ENCODE measurements at regions of chr14 and their contacts with region 1.

Region 1: DNA sequence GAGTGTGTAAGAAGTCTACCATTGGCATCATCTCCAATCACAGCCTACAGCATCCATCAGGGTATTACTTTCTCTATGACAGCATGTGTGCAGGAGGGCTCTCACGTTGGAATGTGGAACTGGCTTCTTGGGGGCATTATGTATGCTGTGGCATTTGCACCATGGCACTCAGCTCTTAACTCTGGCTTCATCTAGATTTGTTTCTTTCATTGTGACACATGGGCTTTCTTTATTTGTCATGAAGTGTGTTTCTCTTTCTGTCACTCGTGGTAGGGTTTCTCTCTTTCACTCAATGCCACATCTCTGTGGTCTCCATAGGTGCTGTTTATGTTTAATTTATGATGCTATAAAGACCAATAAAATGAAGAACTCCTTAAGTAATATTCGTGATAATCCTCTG is 191.2 kb upstream of the GARIN2 start:
- DNase-seq: no peak
- H3K4me3 Mint-ChIP-seq: no peak overlapping the region
- H3K27ac Mint-ChIP-seq: no peak overlapping the region
- H3K4me1 Mint-ChIP-seq: peaks cover 12% of the 10 kb centered on the region
- H3K27me3 Mint-ChIP-seq: no peaks in the 10 kb centered on the region

Region 2: DNA sequence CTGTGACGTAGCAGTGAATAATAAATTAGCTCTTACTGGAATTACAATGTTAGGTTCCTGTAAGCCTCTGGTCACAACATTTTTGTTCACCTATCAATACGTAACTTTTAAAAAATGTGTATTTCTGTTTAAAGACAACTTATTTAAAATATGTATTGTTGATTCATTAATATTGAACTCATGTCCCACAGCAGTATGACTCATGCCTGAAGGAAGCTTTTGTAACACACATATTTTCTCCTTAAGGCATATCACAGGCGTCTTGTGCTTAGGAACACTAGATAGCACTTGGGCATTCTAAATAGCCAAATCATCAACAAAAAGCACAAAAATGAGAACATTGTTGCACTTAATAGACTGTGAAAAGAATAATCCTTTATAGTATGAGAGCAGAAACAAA is 397.6 kb before region 1 on chr14:
- intact Hi-C with region 1: loop called (anchors 10 kb)
- DNase-seq: no peak
- H3K4me3 Mint-ChIP-seq: no peak overlapping the region
- H3K27ac Mint-ChIP-seq: no peak overlapping the region
- H3K4me1 Mint-ChIP-seq: peaks cover 7% of the 10 kb centered on the region
- H3K27me3 Mint-ChIP-seq: no peaks in the 10 kb centered on the region

Region 3: DNA sequence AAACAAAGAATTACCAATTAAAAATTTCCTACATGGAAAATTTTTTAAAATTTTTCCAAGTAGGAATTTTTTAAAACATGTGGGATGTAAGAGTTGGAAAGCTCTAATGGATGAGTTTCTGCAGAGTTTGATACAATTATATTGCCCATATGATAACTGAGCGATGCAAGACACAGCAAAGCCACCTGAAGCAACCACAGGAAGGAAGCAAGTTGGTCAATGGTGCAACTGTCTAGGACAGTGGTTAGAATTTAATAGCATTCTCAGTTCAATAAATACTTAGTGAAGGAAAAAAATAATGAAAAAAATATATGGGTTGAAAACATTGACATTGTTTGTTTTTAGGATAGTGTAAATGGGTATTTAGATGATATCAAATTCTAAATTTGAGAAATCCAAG is 12.6 kb after region 1 on chr14:
- intact Hi-C with region 1: no loop called
- DNase-seq: no peak
- H3K4me3 Mint-ChIP-seq: no peak overlapping the region
- H3K27ac Mint-ChIP-seq: no peak overlapping the region
- H3K4me1 Mint-ChIP-seq: no peaks in the 10 kb centered on the region
- H3K27me3 Mint-ChIP-seq: no peaks in the 10 kb centered on the region

Region 4: DNA sequence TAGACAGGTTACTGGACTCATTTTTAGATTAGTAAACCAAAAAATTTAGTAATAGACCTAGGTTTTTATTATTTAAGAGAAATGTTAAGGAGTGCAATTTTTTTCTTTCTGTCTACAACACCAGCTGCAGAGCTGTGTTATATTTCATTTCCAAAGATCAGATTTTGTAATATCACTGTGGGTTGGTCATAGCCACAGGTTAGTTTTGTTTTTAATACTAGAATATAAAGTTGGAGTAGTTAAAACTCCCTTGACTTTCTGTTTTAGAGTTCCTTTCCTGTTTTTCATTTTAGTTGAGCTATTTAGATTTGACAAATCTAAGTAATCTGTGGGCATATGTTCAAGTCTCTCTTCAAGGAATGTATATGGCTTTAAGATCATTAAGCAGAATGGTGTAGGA is 160.6 kb after region 1 on chr14:
- intact Hi-C with region 1: loop called (anchors 1 kb)
- DNase-seq: no peak
- H3K4me3 Mint-ChIP-seq: no peak overlapping the region
- H3K27ac Mint-ChIP-seq: no peak overlapping the region
- H3K4me1 Mint-ChIP-seq: peaks cover 17% of the 10 kb centered on the region
- H3K27me3 Mint-ChIP-seq: no peaks in the 10 kb centered on the region